ENCODE measurements at regions of chr1 and their contacts with region 1.

Region 1: DNA sequence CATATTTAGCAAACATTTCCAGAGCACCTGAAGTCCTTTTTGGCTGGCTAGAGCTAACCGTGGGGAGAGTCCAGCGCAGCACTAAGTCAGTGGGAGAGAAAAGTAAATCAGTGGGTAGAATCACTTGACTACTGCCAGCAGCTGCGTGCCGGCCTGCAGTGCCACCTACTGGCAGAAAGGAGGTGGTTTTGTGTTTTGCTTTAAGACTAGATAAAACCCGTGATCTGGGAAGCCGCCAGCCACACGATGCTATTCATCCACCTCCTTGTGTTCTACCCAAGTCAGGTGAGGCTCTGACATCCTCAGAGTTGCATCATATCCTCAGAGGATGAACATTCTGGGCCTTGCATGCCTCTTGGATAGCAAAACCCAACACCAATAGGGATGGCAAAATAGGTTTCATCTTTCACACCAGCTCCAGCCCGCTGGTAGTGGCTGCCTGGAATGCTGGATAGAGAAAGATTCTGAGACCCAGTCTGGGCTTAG is 14.1 kb upstream of the HEYL start:
- DNase-seq: peak; percentile 80
- H3K4me3 Mint-ChIP-seq: no peak overlapping the region
- H3K27ac Mint-ChIP-seq: no peak overlapping the region
- H3K4me1 Mint-ChIP-seq: peaks cover 12% of the 10 kb centered on the region
- H3K27me3 Mint-ChIP-seq: peaks cover 7% of the 10 kb centered on the region

Region 2: DNA sequence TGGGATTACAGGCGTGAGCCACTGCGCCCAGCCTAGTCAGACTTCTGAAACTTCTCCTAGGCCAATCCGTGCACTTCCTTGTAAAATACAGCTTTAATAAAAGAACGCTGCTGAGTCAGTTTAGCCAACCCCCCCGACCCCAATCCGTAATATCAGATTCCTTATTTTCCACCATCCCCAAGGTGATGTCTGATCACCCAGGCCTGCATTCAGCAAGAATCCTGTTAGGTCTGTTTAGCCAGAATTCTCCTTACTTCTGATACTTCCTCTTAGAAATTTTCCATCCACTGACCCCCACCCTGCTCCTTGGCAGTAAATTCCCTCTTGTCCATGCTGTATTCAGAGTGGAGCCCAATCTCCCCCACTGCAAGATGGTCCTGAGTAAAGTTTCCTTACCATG is 65.5 kb before region 1 on chr1:
- CTCF ChIA-PET with region 1: interaction called, 10 read pairs
- POLR2A ChIA-PET with region 1: no interaction called
- DNase-seq: no peak
- H3K4me3 Mint-ChIP-seq: no peak overlapping the region
- H3K27ac Mint-ChIP-seq: no peak overlapping the region
- H3K4me1 Mint-ChIP-seq: no peaks in the 10 kb centered on the region
- H3K27me3 Mint-ChIP-seq: no peaks in the 10 kb centered on the region

Region 3: GRCh38 chr1:39609618-39610331 is 43.8 kb before region 1 on chr1:
- CTCF ChIA-PET with region 1: interaction called, 229 read pairs
- POLR2A ChIA-PET with region 1: interaction called, 5 read pairs
- DNase-seq: peak; percentile 65
- H3K4me3 Mint-ChIP-seq: no peak overlapping the region
- H3K27ac Mint-ChIP-seq: no peak overlapping the region
- H3K4me1 Mint-ChIP-seq: peaks cover 7% of the 10 kb centered on the region
- H3K27me3 Mint-ChIP-seq: peaks cover 11% of the 10 kb centered on the region

Region 4: GRCh38 chr1:39672551-39672947 is 19.0 kb after region 1 on chr1:
- CTCF ChIA-PET with region 1: interaction called, 202 read pairs
- POLR2A ChIA-PET with region 1: interaction called, 8 read pairs
- DNase-seq: peak; percentile 41
- H3K4me3 Mint-ChIP-seq: no peak overlapping the region
- H3K27ac Mint-ChIP-seq: no peak overlapping the region
- H3K4me1 Mint-ChIP-seq: peaks cover 7% of the 10 kb centered on the region
- H3K27me3 Mint-ChIP-seq: peaks cover 31% of the 10 kb centered on the region

Region 5: GRCh38 chr1:39720094-39720999 is 66.8 kb after region 1 on chr1:
- CTCF ChIA-PET with region 1: interaction called, 16 read pairs
- POLR2A ChIA-PET with region 1: no interaction called
- DNase-seq: no peak
- H3K4me3 Mint-ChIP-seq: no peak overlapping the region
- H3K27ac Mint-ChIP-seq: no peak overlapping the region
- H3K4me1 Mint-ChIP-seq: no peaks in the 10 kb centered on the region
- H3K27me3 Mint-ChIP-seq: peaks cover 44% of the 10 kb centered on the region

Measured in activated CD4-positive, alpha-beta memory T cell treated with anti-CD3 and anti-CD28 coated beads, Interleukin-2, amount 10 ng/mL, durations not matched to agents 7 days and 5 days (primary cell).